ENCODE measurements at regions of chr2 and their contacts with region 1.

Region 1: GRCh38 chr2:127387655-127388422 is at the start of gene MAP3K2:
- DNase-seq: peak; percentile 96
- ATAC-seq: peak; percentile 73
- H3K4me3 Mint-ChIP-seq: peak within 1 kb of the TSS; percentile 83
- H3K27ac Mint-ChIP-seq: peak within 1 kb of the TSS; percentile 93
- H3K4me1 Mint-ChIP-seq: peaks cover 72% of the 10 kb centered on the region
- H3K27me3 Mint-ChIP-seq: no peaks in the 10 kb centered on the region
- total RNA-seq, gene MAP3K2: 35.2 to 35.6 TPM

Region 2: DNA sequence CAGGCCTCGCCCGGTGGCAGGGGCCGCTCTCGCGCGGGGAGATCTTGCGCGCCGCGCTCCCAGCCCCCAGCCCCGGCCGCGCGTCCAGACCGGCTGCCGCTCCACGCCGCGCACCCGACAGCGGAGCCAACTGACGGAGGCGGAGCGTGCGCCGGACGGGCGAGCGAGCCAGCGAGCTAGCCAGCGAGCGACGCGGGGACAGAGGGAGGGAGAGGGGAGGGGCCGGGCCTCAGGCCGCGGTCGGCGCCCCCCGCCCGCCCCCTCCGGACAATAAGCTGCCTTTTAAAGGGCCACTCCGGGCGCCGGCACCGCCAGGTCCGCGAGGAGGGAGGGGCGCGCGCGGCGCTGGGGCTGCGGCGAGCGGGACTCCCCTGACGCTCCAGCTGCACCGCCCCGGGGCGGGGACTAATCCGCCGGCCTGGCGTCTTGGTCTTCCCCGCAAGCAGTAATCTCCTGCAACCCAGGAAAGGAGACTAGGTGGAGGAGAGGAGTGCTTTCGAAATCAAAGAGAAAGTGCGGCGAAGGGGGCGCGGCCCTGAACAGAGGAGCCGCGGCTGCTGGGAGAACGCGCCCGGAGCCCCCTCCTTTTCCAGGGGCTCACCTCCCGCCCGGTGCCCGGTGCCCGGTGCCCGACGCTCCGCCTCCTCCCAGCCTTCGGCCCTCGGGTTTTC is 280.8 kb before region 1 on chr2 and contains the start of gene BIN1:
- CTCF ChIA-PET with region 1: no interaction called
- POLR2A ChIA-PET with region 1: no interaction called
- intact Hi-C with region 1: loop called in 1 of 2 experiments (anchors 5 kb)
- DNase-seq: peak; percentile 84
- ATAC-seq: peak; percentile 94
- H3K4me3 Mint-ChIP-seq: peak within 1 kb of the TSS; percentile 69
- H3K27ac Mint-ChIP-seq: peak within 1 kb of the TSS; percentile 31
- H3K4me1 Mint-ChIP-seq: peaks cover 4% of the 10 kb centered on the region
- H3K27me3 Mint-ChIP-seq: peaks cover 19% of the 10 kb centered on the region
- total RNA-seq, gene BIN1: 65.2 to 71.0 TPM

Region 3: DNA sequence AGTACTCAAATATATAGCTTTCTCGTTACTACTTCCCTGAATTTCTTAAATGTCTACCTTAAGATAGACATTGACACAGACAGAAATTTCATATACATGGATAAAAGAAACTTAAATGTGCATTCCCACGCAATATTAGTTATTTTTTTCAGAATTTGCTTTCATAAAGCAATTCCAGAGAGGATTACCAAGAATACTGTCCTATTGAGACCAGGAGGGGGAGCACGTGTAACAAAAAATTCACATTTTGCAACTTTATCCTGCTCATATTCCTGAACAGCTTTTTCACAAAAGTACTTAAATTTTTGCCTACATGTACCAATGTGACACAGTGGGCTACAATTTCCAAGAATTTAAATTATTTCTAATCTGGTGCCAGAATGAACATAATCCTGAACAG is 63.2 kb before region 1 on chr2:
- CTCF ChIA-PET with region 1: no interaction called
- POLR2A ChIA-PET with region 1: no interaction called
- intact Hi-C with region 1: loop called in 1 of 2 experiments (anchors 1 kb)
- DNase-seq: no peak
- ATAC-seq: no peak
- H3K4me3 Mint-ChIP-seq: no peak overlapping the region
- H3K27ac Mint-ChIP-seq: no peak overlapping the region
- H3K4me1 Mint-ChIP-seq: peaks cover 7% of the 10 kb centered on the region
- H3K27me3 Mint-ChIP-seq: no peaks in the 10 kb centered on the region

Region 4: DNA sequence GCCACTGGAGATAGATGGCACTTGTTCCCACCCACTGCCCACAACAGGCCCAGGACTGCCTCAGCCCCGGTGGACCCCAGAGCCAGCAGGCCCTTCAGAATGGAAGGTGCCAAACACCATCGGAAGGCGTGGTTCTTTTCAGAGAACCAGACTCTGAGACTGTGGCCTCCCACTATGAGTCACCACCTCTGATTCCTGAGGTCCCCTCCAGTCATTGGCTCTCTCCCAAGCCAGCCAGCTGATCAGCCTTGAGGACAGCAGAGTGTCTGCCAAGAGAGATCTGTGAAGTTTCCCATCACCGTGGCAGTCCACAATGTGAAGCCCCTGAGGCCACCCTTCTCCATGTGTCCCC is 10.4 kb after region 1 on chr2:
- CTCF ChIA-PET with region 1: interaction called, 5 read pairs
- POLR2A ChIA-PET with region 1: interaction called, 4 read pairs
- intact Hi-C with region 1: loop called in 1 of 2 experiments (anchors 1 kb)
- DNase-seq: peak; percentile 76
- ATAC-seq: peak; percentile 75
- H3K4me3 Mint-ChIP-seq: no peak overlapping the region
- H3K27ac Mint-ChIP-seq: no peak overlapping the region
- H3K4me1 Mint-ChIP-seq: peaks cover 20% of the 10 kb centered on the region
- H3K27me3 Mint-ChIP-seq: peaks cover 4% of the 10 kb centered on the region

Region 5: GRCh38 chr2:127701193-127701650 is 313.4 kb after region 1 on chr2 and contains the start of gene SFT2D3:
- CTCF ChIA-PET with region 1: no interaction called
- POLR2A ChIA-PET with region 1: no interaction called
- intact Hi-C with region 1: loop called (anchors 2 to 5 kb)
- DNase-seq: peak; percentile 95
- ATAC-seq: peak; percentile 87
- H3K4me3 Mint-ChIP-seq: peak within 1 kb of the TSS; percentile 88
- H3K27ac Mint-ChIP-seq: peak within 1 kb of the TSS; percentile 95
- H3K4me1 Mint-ChIP-seq: peaks cover 34% of the 10 kb centered on the region
- H3K27me3 Mint-ChIP-seq: no peaks in the 10 kb centered on the region
- total RNA-seq, gene SFT2D3: 2.8 to 3.1 TPM

Region 6: DNA sequence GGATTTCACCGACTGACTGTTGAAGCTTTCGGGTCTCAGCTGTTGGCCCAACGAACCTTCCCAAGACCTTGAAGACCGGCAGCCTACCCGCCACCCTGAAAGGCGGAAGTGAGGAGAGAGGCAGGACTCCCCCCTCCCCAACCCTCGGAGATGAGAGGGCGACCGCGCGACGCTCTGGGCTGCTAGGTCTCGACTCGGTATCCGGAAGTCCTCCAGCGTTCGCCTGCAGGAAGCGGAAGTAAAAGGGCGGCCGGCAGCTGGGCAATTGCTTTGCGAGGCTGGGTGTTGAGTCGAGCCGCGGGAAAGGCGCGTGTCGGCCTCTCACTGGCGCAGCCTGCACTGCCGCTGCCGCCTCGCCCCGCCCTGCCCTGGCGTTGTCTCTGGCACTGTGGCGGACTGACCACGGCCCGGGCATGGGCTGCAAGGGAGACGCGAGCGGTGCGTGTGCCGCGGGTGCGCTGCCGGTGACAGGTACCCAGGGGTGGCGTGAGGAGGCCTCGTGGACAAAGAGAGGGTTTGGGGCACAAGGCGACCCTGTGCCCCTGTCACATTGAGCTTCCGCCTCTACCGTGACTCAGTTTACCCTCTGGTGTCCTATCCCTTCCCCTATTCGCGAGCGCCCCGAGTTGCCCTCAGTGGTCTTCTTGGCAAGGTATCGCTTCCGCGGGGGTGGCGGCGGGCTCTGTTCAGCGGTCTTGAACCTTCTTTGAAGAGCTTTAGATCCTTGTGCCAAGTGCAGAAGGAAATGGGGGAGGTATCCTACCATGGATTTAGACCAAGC is 703.3 kb after region 1 on chr2 and contains the start of gene UGGT1:
- CTCF ChIA-PET with region 1: no interaction called
- POLR2A ChIA-PET with region 1: no interaction called
- intact Hi-C with region 1: loop called in 1 of 2 experiments (anchors 1 kb)
- DNase-seq: peak; percentile 96
- ATAC-seq: peak; percentile 95
- H3K4me3 Mint-ChIP-seq: peak within 1 kb of the TSS; percentile 90
- H3K27ac Mint-ChIP-seq: peak within 1 kb of the TSS; percentile 93
- H3K4me1 Mint-ChIP-seq: peaks cover 44% of the 10 kb centered on the region
- H3K27me3 Mint-ChIP-seq: no peaks in the 10 kb centered on the region
- total RNA-seq, gene UGGT1: 50.0 to 67.2 TPM